ENCODE measurements at regions of chr12 and their contacts with region 1.

Region 1: DNA sequence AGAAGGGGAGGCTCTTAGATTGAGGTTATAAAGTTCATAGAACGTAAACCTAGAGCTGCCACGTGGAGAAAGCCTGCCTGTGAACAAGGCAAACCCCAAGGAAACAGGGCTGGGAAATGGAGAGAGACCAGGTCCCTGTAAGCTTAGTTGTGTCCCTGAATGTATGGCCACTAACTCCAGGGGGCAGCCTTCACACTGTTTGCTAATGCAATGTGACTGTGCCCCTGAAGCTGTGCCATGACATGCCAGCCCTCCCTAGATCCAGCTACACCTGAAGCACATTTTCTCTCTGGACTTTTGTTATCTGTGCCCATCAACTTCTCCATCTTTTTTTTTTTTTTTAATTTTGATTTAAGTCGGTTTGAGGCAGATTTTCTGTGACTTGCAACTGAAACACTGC is 60.6 kb upstream of the TMCC3 start:
- DNase-seq: peak; percentile 43
- H3K4me3 ChIP-seq: no peak overlapping the region
- H3K27ac ChIP-seq: no peak overlapping the region
- H3K4me1 ChIP-seq: no peaks in the 10 kb centered on the region
- H3K27me3 ChIP-seq: no peaks in the 10 kb centered on the region
- CTCF ChIP-seq: peak; percentile 64

Region 2: GRCh38 chr12:94875525-94875924 is 164.6 kb after region 1 on chr12:
- CTCF ChIA-PET with region 1: no interaction called
- POLR2A ChIA-PET with region 1: no interaction called
- intact Hi-C with region 1: loop called (anchors 5 kb)
- DNase-seq: no peak
- H3K4me3 ChIP-seq: no peak overlapping the region
- H3K27ac ChIP-seq: no peak overlapping the region
- H3K4me1 ChIP-seq: no peaks in the 10 kb centered on the region
- H3K27me3 ChIP-seq: peaks cover 74% of the 10 kb centered on the region
- CTCF ChIP-seq: peak; percentile 38